ENCODE measurements at regions of chr1 and their contacts with region 1.

Region 1: DNA sequence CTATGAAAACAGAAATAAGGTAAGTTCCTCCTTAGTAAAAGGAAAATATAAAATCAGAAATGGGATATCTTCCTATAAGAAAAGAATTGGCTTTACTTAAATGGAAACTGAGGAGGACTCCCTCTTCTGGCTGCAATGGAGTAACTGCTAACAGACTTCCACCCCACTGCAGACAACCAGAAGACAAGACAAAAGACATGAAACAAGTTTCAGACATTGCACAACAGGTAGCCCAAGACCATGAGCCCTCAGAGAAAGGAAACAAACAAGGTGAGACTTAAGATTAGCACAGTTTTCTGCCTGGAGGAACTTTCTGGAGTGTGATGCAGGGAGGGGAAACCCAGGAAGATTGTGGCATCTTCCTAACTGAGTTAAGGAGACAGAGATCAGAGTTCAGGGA is 17.0 kb upstream of the OLFML2B start:
- H3K4me3 Mint-ChIP-seq: no peak overlapping the region
- H3K27ac Mint-ChIP-seq: no peak overlapping the region
- H3K4me1 Mint-ChIP-seq: no peaks in the 10 kb centered on the region
- H3K27me3 Mint-ChIP-seq: peaks cover 2% of the 10 kb centered on the region

Region 2: GRCh38 chr1:161792740-161793139 is 247.9 kb before region 1 on chr1:
- intact Hi-C with region 1: loop called (anchors 1 kb)
- H3K4me3 Mint-ChIP-seq: no peak overlapping the region
- H3K27ac Mint-ChIP-seq: no peak overlapping the region
- H3K4me1 Mint-ChIP-seq: no peaks in the 10 kb centered on the region
- H3K27me3 Mint-ChIP-seq: no peaks in the 10 kb centered on the region

Region 3: GRCh38 chr1:161864577-161864976 is 176.1 kb before region 1 on chr1:
- intact Hi-C with region 1: loop called (anchors 2 kb)
- H3K4me3 Mint-ChIP-seq: no peak overlapping the region
- H3K27ac Mint-ChIP-seq: no peak overlapping the region
- H3K4me1 Mint-ChIP-seq: no peaks in the 10 kb centered on the region
- H3K27me3 Mint-ChIP-seq: no peaks in the 10 kb centered on the region

Region 4: DNA sequence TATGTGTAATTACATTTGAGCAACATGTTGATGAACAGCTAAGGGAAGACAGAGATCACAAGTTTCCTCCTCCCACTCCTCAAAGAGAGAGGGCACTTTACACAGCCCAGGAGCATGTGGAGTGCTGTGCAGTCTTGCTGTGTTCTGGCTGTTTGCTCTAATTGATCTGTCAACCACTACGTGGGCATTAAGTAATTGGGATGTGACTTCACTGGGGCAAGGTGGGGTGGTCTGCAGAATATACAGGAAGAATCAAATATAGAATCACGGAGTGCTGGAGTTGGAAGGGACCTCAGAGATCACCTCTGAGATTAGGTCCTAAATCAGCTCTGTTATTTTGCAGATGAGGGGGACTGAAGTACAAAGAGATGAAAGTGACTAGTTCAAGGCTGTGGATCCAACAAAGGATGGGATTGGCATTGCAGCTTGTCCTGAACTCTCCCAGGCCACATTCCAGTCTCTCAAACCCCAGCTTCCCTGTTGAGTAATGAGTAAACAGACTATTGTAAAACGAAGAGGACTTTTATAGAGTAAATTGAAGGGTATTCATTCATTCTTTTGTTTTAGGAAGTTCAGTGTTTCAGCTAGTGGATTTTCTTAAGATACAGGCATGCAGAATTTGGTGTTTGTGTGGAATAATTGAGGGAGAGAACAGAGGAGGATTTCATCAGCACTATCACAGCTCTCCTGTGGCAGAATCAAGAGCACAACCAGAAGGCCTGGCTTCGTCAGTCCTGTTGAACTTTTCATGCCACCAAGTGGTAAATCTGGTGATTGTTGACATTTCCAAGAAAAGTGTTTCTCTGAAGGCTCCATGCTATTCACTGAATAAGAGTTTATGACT is 51.2 kb after region 1 on chr1:
- intact Hi-C with region 1: no loop called
- H3K4me3 Mint-ChIP-seq: no peak overlapping the region
- H3K27ac Mint-ChIP-seq: no peak overlapping the region
- H3K4me1 Mint-ChIP-seq: no peaks in the 10 kb centered on the region
- H3K27me3 Mint-ChIP-seq: peaks cover 3% of the 10 kb centered on the region

Region 5: DNA sequence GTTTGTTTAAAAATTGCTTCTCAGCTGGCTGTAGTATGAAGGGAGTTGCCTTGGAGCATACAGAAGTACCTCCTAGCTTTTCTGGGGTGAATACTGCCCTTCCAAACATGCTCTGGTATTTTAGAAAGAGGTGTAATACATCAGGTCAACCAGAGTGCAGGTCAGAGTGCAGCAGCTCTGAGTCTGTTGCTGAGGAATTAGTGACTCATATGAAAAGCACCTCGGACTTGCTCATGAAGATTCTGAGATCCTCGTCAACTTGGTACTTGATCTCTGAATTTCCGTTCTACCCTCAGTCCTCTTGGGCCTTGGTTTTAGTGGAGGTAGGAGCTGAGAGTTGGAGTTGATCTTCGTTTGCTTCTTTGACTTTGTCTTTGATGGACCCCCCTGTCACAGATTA is 96.1 kb after region 1 on chr1:
- intact Hi-C with region 1: no loop called
- H3K4me3 Mint-ChIP-seq: no peak overlapping the region
- H3K27ac Mint-ChIP-seq: no peak overlapping the region
- H3K4me1 Mint-ChIP-seq: peaks cover 6% of the 10 kb centered on the region
- H3K27me3 Mint-ChIP-seq: peaks cover 4% of the 10 kb centered on the region

Measured in dendritic cell treated with granulocyte-macrophage colony-stimulating factor and Interleukin-4, amounts not matched to agents 40 ng/mL and 50 ng/mL, for 4 days (primary cell).